Esophagus squamous epithelium (tissue), 5 donors: ENCODE measurements at regions of chr3 and their contacts with region 1.

Region 1: DNA sequence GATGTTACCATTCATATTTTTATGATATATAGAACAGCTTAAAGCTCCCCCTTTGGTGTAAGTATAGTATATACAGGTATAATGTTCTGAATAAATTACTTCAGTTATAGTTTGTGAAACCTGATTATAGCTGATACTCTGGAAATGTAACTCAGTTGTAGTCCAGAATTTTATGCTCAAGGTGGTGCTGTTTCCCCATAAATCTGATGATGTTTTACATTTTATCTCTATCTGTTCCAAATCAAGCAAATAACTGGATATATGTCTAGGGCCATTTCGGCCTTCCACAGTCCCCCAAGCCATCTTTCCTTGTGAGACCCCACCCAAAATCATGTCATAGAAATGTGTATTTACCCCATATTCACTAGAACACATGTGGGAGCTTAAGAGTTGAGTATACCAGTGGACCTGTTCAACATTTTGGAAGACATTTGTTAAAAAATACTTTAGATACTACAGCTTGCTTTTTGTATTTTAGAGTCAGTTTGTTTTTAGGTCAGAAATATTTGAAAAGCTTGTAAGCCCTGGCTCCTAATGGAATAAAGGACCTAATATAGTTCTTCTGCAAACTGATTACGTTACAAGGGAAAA is 107.1 kb downstream of the ATG7 start:
- DNase-seq: no peak
- H3K4me3 ChIP-seq: no peak overlapping the region
- H3K27ac ChIP-seq: peak overlapping the region in 3 of 4 donors; percentile 22 to 69 (median 47)
- H3K4me1 ChIP-seq: peaks cover 0 to 20% (median 0%) of the 10 kb centered on the region in 3 donors
- H3K27me3 ChIP-seq: no peaks in the 10 kb centered on the region
- CTCF ChIP-seq: peak in 5 of 6 experiments; percentile 48 to 73 (median 61)
- POLR2A ChIP-seq: no peak

Region 2: GRCh38 chr3:11643605-11644087 is 264.3 kb after region 1 on chr3 and contains the start of gene VGLL4:
- intact Hi-C with region 1: loop called (anchors 5 kb)
- DNase-seq: peak; percentile 20
- H3K4me3 ChIP-seq: peak within 1 kb of the TSS; percentile 51 to 73 (median 64)
- H3K27ac ChIP-seq: peak within 1 kb of the TSS; percentile 80 to 94 (median 88)
- H3K4me1 ChIP-seq: peaks cover 15 to 58% (median 17%) of the 10 kb centered on the region in 3 donors
- H3K27me3 ChIP-seq: no peaks in the 10 kb centered on the region
- CTCF ChIP-seq: peak in 2 of 6 experiments; percentile 9 to 27
- POLR2A ChIP-seq: peak in 3 of 4 donors; percentile 38 to 68 (median 53)
- total RNA-seq, gene VGLL4: 31.8 to 50.0 (median 44.5) TPM

Region 3: GRCh38 chr3:11651900-11652299 is 272.6 kb after region 1 on chr3:
- intact Hi-C with region 1: loop called (anchors 5 kb)
- DNase-seq: no peak
- H3K4me3 ChIP-seq: no peak overlapping the region
- H3K27ac ChIP-seq: no peak overlapping the region
- H3K4me1 ChIP-seq: peaks cover 0 to 6% (median 0%) of the 10 kb centered on the region in 3 donors
- H3K27me3 ChIP-seq: no peaks in the 10 kb centered on the region
- CTCF ChIP-seq: peak in 4 of 6 experiments; percentile 53 to 67 (median 59)
- POLR2A ChIP-seq: no peak

Region 4: GRCh38 chr3:11803977-11804892 is 424.9 kb after region 1 on chr3:
- intact Hi-C with region 1: loop called (anchors 10 kb)
- DNase-seq: peak; percentile 3
- H3K4me3 ChIP-seq: no peak overlapping the region
- H3K27ac ChIP-seq: peak overlapping the region in 2 of 4 donors; percentile 55 to 59
- H3K4me1 ChIP-seq: peaks cover 0 to 27% (median 0%) of the 10 kb centered on the region in 3 donors
- H3K27me3 ChIP-seq: no peaks in the 10 kb centered on the region
- CTCF ChIP-seq: peak in 5 of 6 experiments; percentile 68 to 84 (median 79)
- POLR2A ChIP-seq: no peak